Activated CD4-positive, alpha-beta T cell treated with anti-CD3 and anti-CD28 coated beads for 36 hours (primary cell): ENCODE measurements at regions of chr2 and their contacts with region 1.

Region 1: DNA sequence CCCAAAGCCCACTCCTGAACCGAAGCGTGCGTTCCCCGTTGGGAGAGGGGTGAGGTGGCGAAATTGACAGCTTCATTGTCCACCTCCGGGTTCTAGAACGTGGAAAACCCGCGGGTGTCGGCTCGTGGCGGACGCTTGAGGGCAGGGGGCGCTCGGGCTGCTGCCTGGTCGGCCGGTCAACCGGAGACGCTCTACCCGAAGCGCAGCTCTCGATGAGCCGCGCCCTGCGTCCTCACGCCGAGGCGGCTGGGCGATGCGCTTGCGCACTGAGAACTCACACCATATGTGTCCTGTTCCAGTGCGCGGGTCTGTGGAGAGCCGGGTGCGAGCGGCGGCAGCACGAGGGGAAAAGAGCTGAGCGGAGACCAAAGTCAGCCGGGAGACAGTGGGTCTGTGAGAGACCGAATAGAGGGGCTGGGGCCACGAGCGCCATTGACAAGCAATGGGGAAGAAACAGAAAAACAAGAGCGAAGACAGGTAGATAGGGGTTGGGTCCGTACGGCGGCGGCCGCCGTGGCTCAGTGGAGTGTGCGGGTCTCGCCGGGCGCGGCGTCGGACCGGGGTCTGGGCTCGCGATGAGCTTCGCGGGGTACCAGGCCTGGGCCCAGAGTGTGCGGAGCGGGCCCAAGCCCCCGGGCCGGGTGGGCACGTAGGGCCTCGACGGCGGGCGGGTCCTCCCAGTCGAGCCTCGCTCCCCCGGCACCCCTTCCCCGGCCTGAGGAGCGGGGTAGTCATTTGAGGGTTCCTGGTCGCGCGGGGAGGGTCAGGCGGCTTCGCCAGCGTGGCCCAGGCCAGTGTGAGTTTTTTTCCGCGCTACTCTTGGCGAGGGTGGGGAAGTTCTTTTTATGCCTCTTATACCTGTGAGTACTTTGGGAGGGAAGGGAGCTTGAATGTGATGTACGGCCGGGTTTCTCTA is at the start of gene EIF5B:
- DNase-seq: peak; percentile 95
- ATAC-seq: peak; percentile 71
- H3K4me3 Mint-ChIP-seq: no peak within 1 kb of the TSS
- H3K27ac Mint-ChIP-seq: no peak within 1 kb of the TSS
- H3K4me1 Mint-ChIP-seq: peaks cover 47% of the 10 kb centered on the region
- H3K27me3 Mint-ChIP-seq: no peaks in the 10 kb centered on the region
- total RNA-seq, gene EIF5B: 79.0 to 95.4 TPM

Region 2: DNA sequence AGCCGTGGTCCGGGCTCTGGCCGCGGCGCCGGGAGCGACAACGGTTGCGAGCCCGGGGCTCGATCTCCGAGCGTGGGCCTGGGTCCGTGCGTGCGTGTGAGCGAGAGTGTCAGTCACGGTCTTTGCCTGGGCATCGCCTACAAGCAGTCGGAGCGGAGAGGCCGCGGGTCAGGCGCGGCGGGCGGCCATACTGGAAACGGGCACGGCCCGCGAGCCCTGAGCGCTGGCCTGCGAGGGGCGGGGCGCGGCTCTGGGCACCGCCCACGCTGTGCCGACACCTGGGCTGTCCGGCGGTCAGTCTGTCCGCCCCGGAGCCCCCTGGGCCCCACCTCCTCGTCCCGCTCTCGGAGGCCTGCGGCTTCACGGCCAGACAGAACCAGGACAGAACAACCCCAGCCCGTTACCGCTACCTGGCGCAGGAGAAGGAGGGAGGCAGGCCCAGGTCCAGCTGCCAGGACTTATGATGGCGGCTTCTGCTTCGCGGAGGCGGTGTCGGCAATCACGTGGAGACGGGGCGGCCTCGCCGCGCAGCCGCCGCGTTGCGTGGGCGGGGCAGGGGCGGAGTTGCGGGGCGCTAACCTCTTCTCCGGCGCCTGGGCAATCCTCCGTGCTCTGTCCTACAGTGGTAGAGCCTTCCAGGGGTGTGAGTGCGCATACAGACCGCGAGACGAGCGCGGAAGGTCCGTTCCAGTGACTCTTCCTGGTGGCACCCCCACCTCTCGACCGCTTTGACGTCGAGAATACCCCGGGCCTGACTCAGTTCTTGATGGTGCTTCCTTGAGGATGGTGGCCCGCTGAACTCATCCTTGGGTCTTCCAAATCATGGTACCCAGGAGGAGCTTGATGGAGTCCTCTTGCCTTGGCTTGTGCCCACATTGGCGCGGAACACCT is 1341.4 kb before region 1 on chr2 and contains the start of gene TMEM131:
- CTCF ChIA-PET with region 1: no interaction called
- POLR2A ChIA-PET with region 1: no interaction called
- intact Hi-C with region 1: loop called (anchors 2 to 10 kb)
- DNase-seq: peak; percentile 97
- ATAC-seq: peak; percentile 84
- H3K4me3 Mint-ChIP-seq: peak within 1 kb of the TSS; percentile 85
- H3K27ac Mint-ChIP-seq: peak within 1 kb of the TSS; percentile 97
- H3K4me1 Mint-ChIP-seq: peaks cover 35% of the 10 kb centered on the region
- H3K27me3 Mint-ChIP-seq: no peaks in the 10 kb centered on the region
- total RNA-seq, gene TMEM131: 25.8 to 32.5 TPM

Region 3: GRCh38 chr2:98731041-98731893 is 606.1 kb before region 1 on chr2 and contains the start of gene MGAT4A:
- CTCF ChIA-PET with region 1: no interaction called
- POLR2A ChIA-PET with region 1: no interaction called
- intact Hi-C with region 1: loop called in 1 of 2 experiments (anchors 2 kb)
- DNase-seq: peak; percentile 87
- ATAC-seq: peak; percentile 80
- H3K4me3 Mint-ChIP-seq: peak within 1 kb of the TSS; percentile 88
- H3K27ac Mint-ChIP-seq: peak within 1 kb of the TSS; percentile 93
- H3K4me1 Mint-ChIP-seq: peaks cover 67% of the 10 kb centered on the region
- H3K27me3 Mint-ChIP-seq: no peaks in the 10 kb centered on the region
- total RNA-seq, gene MGAT4A: 49.4 to 67.5 TPM

Region 4: GRCh38 chr2:99180755-99181623 is 156.4 kb before region 1 on chr2 and contains the starts of genes MITD1 and MRPL30:
- CTCF ChIA-PET with region 1: interaction called, 8 read pairs
- POLR2A ChIA-PET with region 1: interaction called, 4 read pairs
- intact Hi-C with region 1: loop called (anchors 1 kb)
- DNase-seq: peak; percentile 93
- ATAC-seq: peak; percentile 93
- H3K4me3 Mint-ChIP-seq: peak within 1 kb of the TSS; percentile 96
- H3K27ac Mint-ChIP-seq: peak within 1 kb of the TSS; percentile 99
- H3K4me1 Mint-ChIP-seq: peaks cover 57% of the 10 kb centered on the region
- H3K27me3 Mint-ChIP-seq: no peaks in the 10 kb centered on the region
- total RNA-seq, gene MITD1: 66.3 to 70.9 TPM
- total RNA-seq, gene MRPL30: 30.8 to 31.2 TPM

Region 5: DNA sequence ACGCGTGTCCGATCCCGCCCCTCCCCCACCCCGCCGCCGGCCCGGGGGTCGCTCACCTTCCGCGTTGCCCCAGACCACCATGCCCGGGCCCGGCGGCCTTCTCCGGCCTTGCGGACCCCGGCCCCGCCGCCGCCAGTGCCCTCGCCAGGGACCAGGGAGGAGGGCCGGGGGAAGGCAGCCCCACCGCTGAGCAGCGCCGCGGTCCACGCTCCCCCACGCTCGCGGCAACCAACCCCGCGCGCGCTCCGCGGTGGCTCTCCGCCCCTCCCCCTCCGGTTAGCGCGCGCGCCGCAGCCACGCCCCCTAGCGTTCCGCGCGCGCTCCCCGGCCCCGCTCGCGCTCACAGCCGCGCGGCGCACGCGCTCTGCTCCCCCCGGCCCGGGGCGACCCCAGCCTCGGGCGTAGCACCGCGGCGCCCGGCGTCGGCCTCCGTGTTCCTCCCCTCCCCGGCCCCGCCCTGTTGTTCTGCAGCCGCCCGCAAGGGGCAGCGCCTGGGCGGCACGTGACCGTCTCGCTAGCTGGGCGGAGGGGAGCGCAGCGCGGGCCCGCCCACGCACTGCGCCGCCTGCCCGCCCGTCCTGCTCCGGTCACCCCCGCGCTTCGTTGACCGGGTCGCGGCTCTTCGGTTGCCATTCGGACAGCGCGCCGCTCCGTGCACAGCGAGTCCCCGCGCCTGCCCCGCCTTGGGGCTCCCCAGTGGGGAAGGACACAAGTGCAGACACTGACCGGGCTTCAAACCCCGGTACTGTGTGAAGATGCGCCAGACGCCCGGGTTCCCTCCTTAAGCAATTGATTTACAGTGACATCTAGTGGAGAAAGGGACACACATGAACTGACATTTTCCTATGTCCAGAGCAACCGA is 152.6 kb after region 1 on chr2 and contains the start of gene REV1:
- CTCF ChIA-PET with region 1: interaction called, 4 read pairs
- POLR2A ChIA-PET with region 1: interaction called, 5 read pairs
- intact Hi-C with region 1: loop called (anchors 1 kb)
- DNase-seq: peak; percentile 97
- ATAC-seq: peak; percentile 89
- H3K4me3 Mint-ChIP-seq: peak within 1 kb of the TSS; percentile 89
- H3K27ac Mint-ChIP-seq: peak within 1 kb of the TSS; percentile 99
- H3K4me1 Mint-ChIP-seq: peaks cover 33% of the 10 kb centered on the region
- H3K27me3 Mint-ChIP-seq: no peaks in the 10 kb centered on the region
- total RNA-seq, gene REV1: 30.0 to 38.2 TPM

Region 6: DNA sequence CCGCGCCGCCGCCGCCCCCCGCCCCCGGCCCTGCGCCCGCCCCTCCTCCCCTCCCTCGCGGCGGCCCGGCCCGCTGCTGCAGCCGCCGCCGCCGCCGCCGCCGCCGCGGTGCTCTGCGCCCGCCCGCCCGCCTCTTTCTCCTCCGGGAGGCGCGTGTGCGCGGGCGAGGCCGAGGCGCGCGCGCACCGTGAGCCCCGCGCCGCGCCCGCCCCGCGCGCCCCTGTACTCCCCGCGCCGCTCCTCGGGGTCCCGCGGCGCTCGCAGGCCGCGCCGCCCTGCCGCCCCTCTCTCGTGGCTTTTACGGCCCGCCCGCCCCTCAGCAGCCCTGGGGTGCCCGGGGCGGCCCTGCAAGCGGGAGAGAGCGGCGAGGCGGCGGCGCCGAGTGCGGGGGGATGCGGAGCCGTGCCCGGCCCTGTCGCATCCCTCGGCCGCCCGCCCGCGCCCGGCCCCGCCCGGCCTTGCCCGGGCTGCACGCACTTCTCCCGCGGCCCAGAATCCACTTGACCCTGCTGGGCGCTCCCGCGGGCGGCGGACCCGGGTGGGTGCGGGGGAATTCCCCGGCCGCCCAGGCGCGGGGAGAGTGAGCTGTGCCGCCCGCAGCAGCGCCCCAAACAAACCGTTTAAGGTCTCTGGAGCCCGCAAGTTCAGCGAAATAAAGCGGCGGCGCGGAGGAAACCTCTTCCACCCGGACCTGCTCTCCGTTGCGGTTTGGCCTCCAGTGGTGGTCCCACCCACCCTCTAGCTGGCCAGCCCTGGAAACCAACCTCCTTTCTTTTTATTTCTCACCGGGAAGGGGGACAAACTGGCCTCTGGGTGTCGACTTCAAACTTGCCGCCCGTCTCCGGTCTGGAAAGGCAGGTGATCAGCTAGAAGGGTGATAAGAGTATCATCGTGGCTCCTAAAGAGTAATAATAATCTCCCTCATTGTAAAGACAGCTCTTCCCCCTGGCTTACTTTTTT is 767.6 kb after region 1 on chr2:
- CTCF ChIA-PET with region 1: no interaction called
- POLR2A ChIA-PET with region 1: no interaction called
- intact Hi-C with region 1: no loop called
- DNase-seq: peak; percentile 52
- ATAC-seq: peak; percentile 76
- H3K4me3 Mint-ChIP-seq: peak overlapping the region; percentile 72
- H3K27ac Mint-ChIP-seq: peak overlapping the region; percentile 56
- H3K4me1 Mint-ChIP-seq: peaks cover 12% of the 10 kb centered on the region
- H3K27me3 Mint-ChIP-seq: peaks cover 9% of the 10 kb centered on the region